ENCODE measurements at regions of chr2 and their contacts with region 1.

Region 1: DNA sequence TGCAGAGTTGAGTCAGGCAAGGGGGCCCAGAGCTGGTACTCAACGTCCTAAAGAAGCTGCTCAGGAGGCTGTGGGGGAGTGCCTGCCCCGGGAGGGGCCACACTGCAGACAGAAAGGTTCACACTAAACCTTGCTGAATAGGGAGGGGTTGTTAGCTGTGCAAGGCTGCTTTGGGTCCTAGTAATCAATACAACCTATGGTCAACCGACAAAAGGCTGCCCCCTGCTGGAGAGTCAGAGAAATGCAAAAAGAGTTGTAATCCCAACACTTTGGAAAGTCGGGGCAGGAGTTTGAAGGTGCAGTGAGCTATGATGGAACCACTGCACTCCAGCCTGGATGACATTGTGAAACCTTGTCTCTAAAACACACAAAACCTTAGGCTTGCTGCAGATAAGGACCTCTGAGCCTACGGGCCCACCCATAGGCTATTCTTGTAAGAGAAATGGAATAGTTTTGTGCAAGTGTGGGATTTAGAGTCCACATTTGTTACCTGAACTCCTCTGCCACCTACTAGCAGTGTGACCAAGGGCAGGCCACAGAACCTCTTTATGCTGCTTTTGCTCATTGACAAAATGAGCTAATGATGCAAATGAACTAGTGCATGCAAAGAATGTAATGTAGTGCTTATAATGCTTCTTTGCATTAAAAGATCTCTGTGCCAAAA is 81.5 kb downstream of the PRPF40A start:
- DNase-seq: no peak
- H3K4me3 ChIP-seq: no peak overlapping the region
- H3K27me3 ChIP-seq: no peaks in the 10 kb centered on the region
- CTCF ChIP-seq: peak; percentile 75

Region 2: GRCh38 chr2:152036611-152037469 is 598.9 kb before region 1 on chr2:
- CTCF ChIA-PET with region 1: interaction called, 15 read pairs
- POLR2A ChIA-PET with region 1: no interaction called
- DNase-seq: no peak
- H3K4me3 ChIP-seq: no peak overlapping the region
- H3K27me3 ChIP-seq: peaks cover 6% of the 10 kb centered on the region
- CTCF ChIP-seq: peak; percentile 80

Region 3: GRCh38 chr2:152175458-152176325 is 460.1 kb before region 1 on chr2 and contains the start of gene STAM2:
- CTCF ChIA-PET with region 1: interaction called, 33 read pairs
- POLR2A ChIA-PET with region 1: no interaction called
- DNase-seq: peak; percentile 63
- H3K4me3 ChIP-seq: peak within 1 kb of the TSS; percentile 67
- H3K27me3 ChIP-seq: no peaks in the 10 kb centered on the region
- CTCF ChIP-seq: peak; percentile 98
- polyA plus RNA-seq, gene STAM2: 12.4 and 23.5 TPM in 2 replicates

Region 4: GRCh38 chr2:152183401-152184073 is 452.2 kb before region 1 on chr2:
- CTCF ChIA-PET with region 1: interaction called, 33 read pairs
- POLR2A ChIA-PET with region 1: no interaction called
- DNase-seq: no peak
- H3K4me3 ChIP-seq: no peak overlapping the region
- H3K27me3 ChIP-seq: peaks cover 4% of the 10 kb centered on the region; the same call in 1 of the 2 replicates
- CTCF ChIP-seq: no peak

Region 5: DNA sequence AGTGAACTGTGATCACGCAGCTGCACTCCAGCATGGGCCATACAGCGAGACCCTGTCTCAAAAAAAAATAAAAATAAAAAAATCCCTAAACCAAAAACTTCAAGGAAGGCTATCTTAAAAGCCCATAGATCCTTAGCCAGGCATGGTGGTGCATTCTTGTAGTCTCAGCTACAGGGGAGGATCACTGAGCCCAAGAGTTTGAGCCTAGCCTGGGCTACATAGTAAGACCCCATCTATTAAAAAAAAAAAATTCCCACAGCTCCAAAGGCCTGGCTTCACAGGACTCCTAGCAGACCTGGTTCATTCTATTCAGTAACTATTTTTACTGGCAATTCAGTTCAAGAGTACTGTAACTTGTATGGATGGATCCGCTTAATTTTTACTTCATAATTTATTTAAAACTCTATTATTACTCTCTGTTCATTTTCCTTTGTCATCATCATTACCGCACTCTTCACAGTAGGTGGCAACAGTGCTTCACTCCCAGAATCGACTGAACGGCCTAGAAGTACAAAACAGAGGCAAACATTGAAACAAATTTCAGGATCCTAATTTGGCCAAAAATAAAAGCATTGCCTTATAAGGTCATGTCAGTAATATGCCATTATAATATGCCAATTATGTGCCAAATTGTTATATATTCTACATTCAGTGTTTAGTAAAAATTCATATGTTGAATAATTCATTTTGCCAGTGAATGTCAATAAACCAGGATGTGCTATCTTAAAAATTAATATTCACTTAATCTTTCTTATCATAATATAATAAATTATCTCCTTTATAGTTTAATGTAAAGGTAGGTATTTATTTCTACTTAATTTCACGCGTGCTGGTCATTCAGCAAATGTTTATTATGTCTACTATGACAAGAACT is 445.9 kb before region 1 on chr2:
- CTCF ChIA-PET with region 1: interaction called, 23 read pairs
- POLR2A ChIA-PET with region 1: no interaction called
- DNase-seq: no peak
- H3K4me3 ChIP-seq: no peak overlapping the region
- H3K27me3 ChIP-seq: no peaks in the 10 kb centered on the region
- CTCF ChIP-seq: peak; percentile 80

Region 6: DNA sequence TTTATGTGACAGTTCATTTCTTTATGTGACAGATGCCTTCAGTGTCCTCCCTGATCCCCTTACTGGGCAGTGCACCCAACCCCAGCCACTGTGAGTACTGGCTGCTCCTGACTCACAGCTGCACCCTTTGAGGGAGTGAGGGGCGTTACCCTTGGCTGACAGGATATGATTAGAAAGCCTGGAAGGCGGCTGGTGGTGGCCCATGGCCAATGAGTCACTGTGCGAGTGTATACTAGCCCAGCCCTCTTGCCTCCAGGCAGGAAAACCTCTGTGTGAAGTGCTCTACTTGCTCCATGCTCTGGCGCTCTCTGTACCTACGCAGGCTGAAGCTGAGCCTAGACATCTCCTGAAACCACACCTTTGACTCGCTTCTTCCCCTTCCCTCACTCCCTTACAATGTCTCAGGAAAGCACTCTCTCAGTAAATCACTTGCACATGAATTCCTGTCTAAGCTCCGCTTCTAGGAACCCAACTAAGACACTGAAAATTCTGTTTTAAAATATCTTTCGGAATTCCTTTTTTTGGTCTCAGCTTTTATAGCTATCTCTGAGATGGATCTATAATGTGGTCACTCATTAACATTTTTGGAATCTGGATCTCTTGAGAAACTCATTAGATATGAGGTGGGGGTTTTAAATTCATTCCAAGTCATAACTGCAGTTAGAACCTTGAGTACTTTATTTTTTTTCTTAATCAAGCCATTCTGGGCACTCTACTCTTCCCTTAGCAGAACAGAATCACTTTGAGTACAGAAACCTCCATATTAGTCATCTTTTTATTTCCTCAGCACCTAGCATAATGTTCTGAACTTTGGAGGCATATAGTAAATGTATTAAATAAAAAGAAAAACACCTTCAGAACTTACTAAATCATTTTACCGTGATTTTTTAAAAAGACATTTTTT is 435.0 kb before region 1 on chr2:
- CTCF ChIA-PET with region 1: interaction called, 15 read pairs
- POLR2A ChIA-PET with region 1: no interaction called
- DNase-seq: peak; percentile 93
- H3K4me3 ChIP-seq: peak overlapping the region; percentile 10
- H3K27me3 ChIP-seq: no peaks in the 10 kb centered on the region
- CTCF ChIP-seq: no peak

Region 7: GRCh38 chr2:152648336-152648735 is 12.6 kb after region 1 on chr2:
- CTCF ChIA-PET with region 1: interaction called, 36 read pairs
- POLR2A ChIA-PET with region 1: no interaction called
- DNase-seq: no peak
- H3K4me3 ChIP-seq: no peak overlapping the region
- H3K27me3 ChIP-seq: no peaks in the 10 kb centered on the region
- CTCF ChIP-seq: peak; percentile 33; the same call in 1 of the 2 replicates

Region 8: GRCh38 chr2:152682663-152683062 is 46.9 kb after region 1 on chr2:
- CTCF ChIA-PET with region 1: no interaction called
- POLR2A ChIA-PET with region 1: no interaction called
- DNase-seq: no peak
- H3K4me3 ChIP-seq: no peak overlapping the region
- H3K27me3 ChIP-seq: no peaks in the 10 kb centered on the region
- CTCF ChIP-seq: no peak

Measured in BJ (cell line).